ENCODE measurements at regions of chr10 and their contacts with region 1.

Region 1: DNA sequence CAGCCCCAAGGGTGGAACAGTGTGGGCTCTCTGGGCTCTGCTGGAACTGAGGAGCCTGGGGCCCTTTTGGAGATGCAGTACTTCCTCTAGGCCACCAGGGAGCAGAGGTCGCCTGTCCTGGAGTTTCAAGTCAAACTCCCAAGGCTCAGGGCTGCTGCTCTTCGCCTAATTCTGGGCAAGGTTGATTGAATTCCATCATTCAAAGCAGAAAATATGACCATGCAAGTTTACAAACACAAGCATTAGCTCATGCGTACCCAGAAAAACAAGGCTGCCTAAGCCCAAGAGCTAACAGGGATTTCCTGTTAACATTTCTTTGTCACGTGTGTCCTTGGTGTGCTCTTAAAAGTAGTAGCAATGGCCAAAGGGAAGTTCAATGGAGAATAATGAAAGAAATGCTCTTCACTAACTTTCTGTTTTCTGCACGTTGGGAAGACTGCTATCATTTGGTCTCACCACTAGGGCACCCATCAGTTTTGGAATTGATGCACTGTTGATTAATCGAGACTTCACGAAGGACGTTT is 20.1 kb downstream of the LDB3 start:
- DNase-seq: peak in 1 of 2 donors; percentile 79
- H3K4me3 ChIP-seq: no peak overlapping the region
- H3K27ac ChIP-seq: peak overlapping the region in 1 of 2 donors; percentile 19
- H3K4me1 ChIP-seq: peaks cover 15 to 51% of the 10 kb centered on the region in 2 donors
- H3K27me3 ChIP-seq: no peaks in the 10 kb centered on the region
- CTCF ChIP-seq: peak; percentile 73 to 94 (median 85)

Region 2: DNA sequence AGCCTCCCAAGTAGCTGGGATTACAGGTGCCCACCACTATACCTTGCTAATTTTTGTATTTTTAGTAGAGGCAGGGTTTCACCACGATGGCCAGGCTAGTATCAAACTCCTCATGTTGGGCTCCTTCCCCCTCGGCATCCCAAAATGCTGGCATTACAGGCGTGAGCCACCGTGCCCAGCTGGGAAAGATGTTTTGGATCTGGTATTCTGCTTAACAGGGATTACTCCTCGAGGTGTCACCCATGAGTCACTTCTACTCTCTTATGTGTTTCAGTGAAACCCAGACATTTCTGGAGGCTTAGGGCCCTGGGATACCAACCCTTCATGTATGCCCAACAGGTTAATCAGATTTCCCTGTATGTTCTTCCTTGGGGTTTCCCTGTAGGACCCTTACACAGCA is 46.0 kb before region 1 on chr10:
- intact Hi-C with region 1: loop called (anchors 2 kb)
- DNase-seq: peak in 1 of 2 donors; percentile 59
- H3K4me3 ChIP-seq: no peak overlapping the region
- H3K27ac ChIP-seq: no peak overlapping the region
- H3K4me1 ChIP-seq: peaks cover 0 to 13% of the 10 kb centered on the region in 2 donors
- H3K27me3 ChIP-seq: no peaks in the 10 kb centered on the region
- CTCF ChIP-seq: no peak

Region 3: GRCh38 chr10:86899670-86900276 is 211.3 kb after region 1 on chr10:
- intact Hi-C with region 1: loop called (anchors 1 kb)
- DNase-seq: peak in 1 of 2 donors; percentile 81
- H3K4me3 ChIP-seq: no peak overlapping the region
- H3K27ac ChIP-seq: peak overlapping the region in 1 of 2 donors; percentile 15
- H3K4me1 ChIP-seq: peaks cover 0 to 17% of the 10 kb centered on the region in 2 donors
- H3K27me3 ChIP-seq: no peaks in the 10 kb centered on the region
- CTCF ChIP-seq: peak; percentile 64 to 73 (median 69)

Measured in ascending aorta (tissue), 2 donors.